Esophagus squamous epithelium (tissue), 5 donors: ENCODE measurements at regions of chr17 and their contacts with region 1.

Region 1: GRCh38 chr17:13594762-13595598 is 6.7 kb downstream of the HS3ST3A1 start:
- DNase-seq: peak; percentile 16
- H3K4me3 ChIP-seq: no peak overlapping the region
- H3K27ac ChIP-seq: peak overlapping the region in 1 of 4 donors; percentile 18
- H3K4me1 ChIP-seq: peaks cover 0 to 26% (median 0%) of the 10 kb centered on the region in 3 donors
- H3K27me3 ChIP-seq: peaks cover 0 to 34% (median 0%) of the 10 kb centered on the region in 4 donors
- CTCF ChIP-seq: peak; percentile 76 to 92 (median 86)
- POLR2A ChIP-seq: no peak

Region 2: DNA sequence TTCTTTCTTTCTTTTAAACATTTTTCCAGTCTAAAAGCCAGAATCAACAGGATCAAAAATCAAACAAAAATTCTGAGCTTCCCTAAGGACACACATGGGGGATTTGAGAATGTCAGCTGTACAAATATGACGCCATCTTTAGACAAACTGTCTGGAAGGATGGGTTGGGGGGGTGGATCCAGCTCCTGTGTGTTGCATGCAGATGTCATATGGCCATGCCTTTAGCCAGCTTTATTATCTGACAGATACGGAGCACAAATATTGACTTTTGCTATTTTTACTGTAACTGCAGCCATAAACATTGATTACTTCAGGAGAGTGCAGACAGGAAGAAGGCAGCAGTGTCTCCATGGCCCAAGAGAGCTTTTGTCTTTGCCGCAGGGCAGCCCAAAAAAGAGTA is 297.8 kb before region 1 on chr17:
- intact Hi-C with region 1: no loop called
- DNase-seq: no peak
- H3K4me3 ChIP-seq: no peak overlapping the region
- H3K27ac ChIP-seq: no peak overlapping the region
- H3K4me1 ChIP-seq: no peaks in the 10 kb centered on the region
- H3K27me3 ChIP-seq: no peaks in the 10 kb centered on the region
- CTCF ChIP-seq: no peak
- POLR2A ChIP-seq: no peak

Region 3: DNA sequence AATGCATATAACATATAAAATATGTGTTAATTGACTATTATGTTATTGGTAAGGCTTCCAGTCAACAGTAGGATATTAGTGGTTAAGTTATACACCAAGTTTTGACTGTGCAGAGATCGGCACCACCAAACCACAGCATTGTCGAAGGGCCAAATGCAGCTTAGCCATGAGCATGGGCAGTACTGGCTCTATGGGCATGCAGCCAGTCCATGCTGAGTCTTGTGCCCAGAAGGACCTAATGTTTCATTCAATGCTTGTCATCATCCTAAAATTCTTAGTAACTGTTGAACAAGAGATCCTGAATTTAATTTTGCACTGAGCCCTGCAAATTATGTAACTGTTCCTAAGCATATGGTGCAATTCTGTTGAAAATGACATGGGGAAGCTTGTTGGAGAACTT is 240.2 kb after region 1 on chr17:
- intact Hi-C with region 1: no loop called
- DNase-seq: no peak
- H3K4me3 ChIP-seq: no peak overlapping the region
- H3K27ac ChIP-seq: no peak overlapping the region
- H3K4me1 ChIP-seq: peaks cover 0 to 7% (median 0%) of the 10 kb centered on the region in 3 donors
- H3K27me3 ChIP-seq: no peaks in the 10 kb centered on the region
- CTCF ChIP-seq: no peak
- POLR2A ChIP-seq: no peak

Region 4: DNA sequence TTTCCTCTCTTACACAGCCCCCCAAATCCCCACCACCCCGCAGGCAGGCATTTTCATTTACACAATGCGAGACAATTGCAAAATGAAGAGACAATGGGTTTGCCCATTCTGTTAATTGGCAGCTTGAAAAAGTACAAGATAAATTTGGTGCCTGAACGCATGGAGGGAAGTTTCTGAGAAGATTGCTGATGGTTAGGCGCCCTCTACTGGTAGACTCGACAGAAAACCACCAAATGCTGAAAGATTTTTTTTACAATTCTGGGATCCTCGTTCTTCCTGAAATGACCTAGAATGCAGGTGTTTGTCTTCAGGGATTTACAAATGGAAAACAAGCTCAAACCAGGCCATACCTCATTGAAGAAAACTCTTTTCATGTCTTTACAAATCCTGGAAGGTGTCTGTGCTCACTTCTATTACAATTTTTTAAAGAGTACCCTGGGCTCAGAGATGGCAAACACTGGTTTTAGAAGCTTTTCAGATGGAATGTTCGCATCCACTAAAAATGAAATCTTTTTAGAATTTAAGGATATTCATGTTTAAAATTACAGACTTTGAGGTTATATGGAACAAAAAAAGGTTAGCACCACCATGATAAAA is 1331.6 kb after region 1 on chr17:
- intact Hi-C with region 1: loop called (anchors 10 kb)
- DNase-seq: no peak
- H3K4me3 ChIP-seq: no peak overlapping the region
- H3K27ac ChIP-seq: no peak overlapping the region
- H3K4me1 ChIP-seq: peaks cover 0 to 11% (median 0%) of the 10 kb centered on the region in 3 donors
- H3K27me3 ChIP-seq: peaks cover 0 to 9% (median 0%) of the 10 kb centered on the region in 4 donors
- CTCF ChIP-seq: peak; percentile 60 to 84 (median 74)
- POLR2A ChIP-seq: no peak